ENCODE measurements at regions of chr1 and their contacts with region 1.

Region 1: DNA sequence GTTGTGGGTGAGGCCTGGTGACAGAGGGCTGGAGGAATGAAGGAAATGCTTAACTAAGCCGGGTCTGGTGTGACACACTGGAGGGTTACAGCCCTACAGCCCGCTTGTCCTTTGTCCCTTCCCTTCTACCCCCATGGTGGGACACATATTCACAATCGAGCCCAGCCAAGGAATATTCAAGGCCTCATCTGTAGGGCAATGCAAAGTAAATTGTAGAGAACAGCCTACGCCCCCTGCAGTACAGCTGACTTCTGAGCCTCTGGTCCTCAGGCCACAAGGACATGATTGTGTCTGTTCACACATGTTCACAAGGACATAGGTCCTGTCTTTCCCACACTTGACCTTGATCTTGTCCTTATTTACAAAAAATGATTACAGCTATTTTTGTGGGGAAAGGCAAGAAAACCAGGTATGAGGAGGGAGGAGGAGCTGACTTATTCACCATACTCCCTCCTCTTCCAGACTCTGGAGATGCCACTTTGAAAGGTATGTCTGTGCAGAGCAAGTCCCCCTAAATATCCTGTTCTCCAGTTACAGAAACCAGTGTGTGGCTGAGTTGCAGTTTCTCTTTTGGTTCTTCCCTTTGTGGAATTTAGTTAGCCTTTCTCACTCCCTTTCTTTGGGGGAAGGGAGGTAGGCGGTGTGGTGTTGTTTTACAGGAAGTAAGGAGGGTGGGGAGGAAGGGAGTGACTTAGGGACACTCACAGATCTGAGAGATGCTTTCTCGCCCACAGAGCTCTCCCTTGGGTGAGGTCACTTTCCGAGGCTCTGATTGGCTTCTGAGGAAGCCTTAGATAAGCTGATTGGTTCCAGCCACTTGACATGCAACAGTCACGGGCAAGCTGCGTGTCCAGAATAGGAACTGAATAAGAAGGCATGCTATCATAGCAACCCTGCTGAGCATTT is 14.6 kb downstream of the POLR3GL start:
- DNase-seq: peak; percentile 68 to 93
- ATAC-seq: peak; percentile 81 to 93 (median 87)
- H3K4me3 ChIP-seq: peak overlapping the region; percentile 6
- H3K4me3 Mint-ChIP-seq: no peak overlapping the region
- H3K27ac ChIP-seq: peak overlapping the region; percentile 97
- H3K27ac Mint-ChIP-seq: no peak overlapping the region
- H3K4me1 ChIP-seq: peaks cover 58% of the 10 kb centered on the region
- H3K4me1 Mint-ChIP-seq: peaks cover 10 to 29% of the 10 kb centered on the region in 2 donors
- H3K27me3 ChIP-seq: no peaks in the 10 kb centered on the region
- H3K27me3 Mint-ChIP-seq: no peaks in the 10 kb centered on the region
- CTCF ChIP-seq: no peak

Region 2: GRCh38 chr1:145804235-145805045 is 174.7 kb before region 1 on chr1:
- intact Hi-C with region 1: no loop called
- DNase-seq: no peak
- ATAC-seq: peak in 1 of 3 donors; percentile 30
- H3K4me3 ChIP-seq: no peak overlapping the region
- H3K4me3 Mint-ChIP-seq: no peak overlapping the region
- H3K27ac ChIP-seq: no peak overlapping the region
- H3K27ac Mint-ChIP-seq: peak overlapping the region in 1 of 2 donors; percentile 35
- H3K4me1 ChIP-seq: no peaks in the 10 kb centered on the region
- H3K4me1 Mint-ChIP-seq: peaks cover 62 to 73% of the 10 kb centered on the region in 2 donors
- H3K27me3 ChIP-seq: no peaks in the 10 kb centered on the region
- H3K27me3 Mint-ChIP-seq: no peaks in the 10 kb centered on the region
- CTCF ChIP-seq: no peak

Region 3: DNA sequence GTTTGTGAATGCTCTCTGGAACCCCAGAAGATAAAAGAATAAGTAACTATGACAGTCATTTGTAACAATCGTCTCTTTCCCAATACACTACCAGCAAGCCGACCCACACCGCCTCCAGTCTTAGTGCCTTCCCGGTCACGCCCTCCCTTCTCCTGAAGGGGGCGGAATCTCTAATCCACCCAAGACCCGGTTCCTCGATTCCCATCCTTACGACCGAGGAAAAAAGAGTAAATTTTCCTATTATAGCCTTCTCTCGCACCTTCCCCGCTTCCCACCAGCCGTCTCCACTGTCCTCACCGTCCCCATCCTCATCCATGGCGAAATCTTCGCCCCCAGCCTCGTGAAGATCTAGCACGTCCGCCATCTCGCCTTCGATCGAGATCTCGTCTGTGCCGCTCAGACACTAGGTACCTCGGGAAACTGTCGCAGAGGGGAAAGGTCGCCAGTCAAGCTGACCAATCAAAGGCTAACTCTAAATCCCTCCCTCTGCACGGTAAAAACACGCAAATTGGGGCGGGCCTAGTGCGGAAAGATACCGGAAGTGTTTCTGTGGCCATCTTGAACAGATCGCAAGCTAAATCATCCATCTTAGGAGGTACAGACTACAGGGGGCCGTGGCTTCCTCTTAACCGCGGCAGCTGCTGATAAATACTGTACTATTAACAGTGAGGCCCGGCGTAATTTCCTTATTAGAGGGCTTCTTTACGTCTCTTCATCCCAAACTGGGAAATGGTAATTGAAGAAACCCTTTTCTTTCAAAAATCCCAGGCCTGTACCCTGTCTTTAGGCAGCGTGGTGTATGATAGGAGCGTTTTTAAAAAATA is 51.8 kb before region 1 on chr1 and contains the start of gene RBM8A:
- intact Hi-C with region 1: loop called (anchors 5 kb)
- DNase-seq: peak; percentile 87 to 99
- ATAC-seq: peak; percentile 96 to 99 (median 96)
- H3K4me3 ChIP-seq: peak within 1 kb of the TSS; percentile 64
- H3K4me3 Mint-ChIP-seq: no peak within 1 kb of the TSS
- H3K27ac ChIP-seq: peak within 1 kb of the TSS; percentile 100
- H3K27ac Mint-ChIP-seq: no peak within 1 kb of the TSS
- H3K4me1 ChIP-seq: peaks cover 25% of the 10 kb centered on the region
- H3K4me1 Mint-ChIP-seq: peaks cover 14 to 20% of the 10 kb centered on the region in 2 donors
- H3K27me3 ChIP-seq: no peaks in the 10 kb centered on the region
- H3K27me3 Mint-ChIP-seq: no peaks in the 10 kb centered on the region
- CTCF ChIP-seq: peak; percentile 73
- total RNA-seq, gene RBM8A: 172 to 204 (median 200) TPM

Region 4: GRCh38 chr1:145947551-145947950 is 31.6 kb before region 1 on chr1:
- intact Hi-C with region 1: no loop called
- DNase-seq: no peak
- ATAC-seq: no peak
- H3K4me3 ChIP-seq: no peak overlapping the region
- H3K4me3 Mint-ChIP-seq: no peak overlapping the region
- H3K27ac ChIP-seq: no peak overlapping the region
- H3K27ac Mint-ChIP-seq: peak overlapping the region in 1 of 2 donors; percentile 50
- H3K4me1 ChIP-seq: peaks cover 9% of the 10 kb centered on the region
- H3K4me1 Mint-ChIP-seq: peaks cover 20 to 39% of the 10 kb centered on the region in 2 donors
- H3K27me3 ChIP-seq: no peaks in the 10 kb centered on the region
- H3K27me3 Mint-ChIP-seq: no peaks in the 10 kb centered on the region
- CTCF ChIP-seq: no peak

Region 5: DNA sequence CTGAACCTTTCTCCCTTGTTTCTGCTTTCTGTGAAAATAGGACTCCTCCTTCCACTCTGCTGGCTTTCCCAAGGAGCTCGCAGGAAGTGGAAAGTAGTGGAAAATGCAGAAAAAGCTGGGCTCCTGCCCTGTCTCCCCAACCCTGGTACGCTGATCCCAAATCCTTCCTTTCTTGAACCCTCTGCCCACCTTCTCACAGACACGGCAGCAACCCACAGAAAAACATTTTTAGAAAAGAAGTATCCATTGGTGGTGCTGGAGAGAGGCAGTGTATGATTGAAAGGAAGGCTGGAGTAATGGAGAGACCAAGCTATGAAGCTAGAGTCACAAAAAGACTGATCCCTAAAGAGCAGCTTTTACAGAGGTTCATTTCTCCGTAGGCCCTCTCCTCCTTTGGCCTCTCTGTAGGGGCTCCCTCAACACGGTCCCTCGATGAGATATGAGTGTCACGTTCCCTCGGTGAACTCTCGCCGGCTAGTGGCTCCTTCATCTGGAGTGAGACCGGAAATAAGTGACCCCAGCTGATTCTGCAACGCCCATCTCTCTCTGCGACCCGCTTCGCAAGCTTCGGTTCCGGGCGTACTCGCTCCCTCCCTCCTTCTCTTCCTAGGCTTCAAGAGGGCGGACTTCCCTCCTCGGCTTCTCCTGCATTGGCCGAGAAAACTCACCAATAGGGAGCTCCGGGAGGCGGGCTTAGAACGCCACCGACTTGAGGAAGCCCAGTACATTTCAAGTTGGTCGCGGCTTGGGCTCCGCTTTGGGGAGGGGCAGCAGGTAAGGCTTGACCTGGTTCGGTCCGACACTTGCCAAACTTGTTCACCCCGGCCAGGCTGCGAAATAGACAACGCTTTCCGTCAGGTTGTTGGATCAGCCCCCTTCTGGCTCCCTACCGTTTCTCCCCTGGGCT is 14.9 kb before region 1 on chr1 and contains the starts of genes ANKRD34A and POLR3GL:
- intact Hi-C with region 1: loop called (anchors 2 kb)
- DNase-seq: peak; percentile 87 to 94
- ATAC-seq: peak; percentile 90 to 98 (median 94)
- H3K4me3 ChIP-seq: peak within 1 kb of the TSS; percentile 68
- H3K4me3 Mint-ChIP-seq: peak within 1 kb of the TSS; percentile 94
- H3K27ac ChIP-seq: peak within 1 kb of the TSS; percentile 81
- H3K27ac Mint-ChIP-seq: peak within 1 kb of the TSS; percentile 87 to 95
- H3K4me1 ChIP-seq: peaks cover 48% of the 10 kb centered on the region
- H3K4me1 Mint-ChIP-seq: peaks cover 55 to 65% of the 10 kb centered on the region in 2 donors
- H3K27me3 ChIP-seq: no peaks in the 10 kb centered on the region
- H3K27me3 Mint-ChIP-seq: no peaks in the 10 kb centered on the region
- CTCF ChIP-seq: no peak
- total RNA-seq, gene ANKRD34A: 1.4 to 1.9 (median 1.4) TPM
- total RNA-seq, gene POLR3GL: 34.9 to 37.5 (median 37.4) TPM

Region 6: GRCh38 chr1:145990249-145991097 is 11.4 kb after region 1 on chr1:
- intact Hi-C with region 1: no loop called
- DNase-seq: peak in 1 of 2 donors; percentile 39
- ATAC-seq: no peak
- H3K4me3 ChIP-seq: no peak overlapping the region
- H3K4me3 Mint-ChIP-seq: peak overlapping the region; percentile 97
- H3K27ac ChIP-seq: no peak overlapping the region
- H3K27ac Mint-ChIP-seq: peak overlapping the region; percentile 97 to 99
- H3K4me1 ChIP-seq: peaks cover 29% of the 10 kb centered on the region
- H3K4me1 Mint-ChIP-seq: peaks cover 62 to 69% of the 10 kb centered on the region in 2 donors
- H3K27me3 ChIP-seq: no peaks in the 10 kb centered on the region
- H3K27me3 Mint-ChIP-seq: no peaks in the 10 kb centered on the region
- CTCF ChIP-seq: no peak

Region 7: DNA sequence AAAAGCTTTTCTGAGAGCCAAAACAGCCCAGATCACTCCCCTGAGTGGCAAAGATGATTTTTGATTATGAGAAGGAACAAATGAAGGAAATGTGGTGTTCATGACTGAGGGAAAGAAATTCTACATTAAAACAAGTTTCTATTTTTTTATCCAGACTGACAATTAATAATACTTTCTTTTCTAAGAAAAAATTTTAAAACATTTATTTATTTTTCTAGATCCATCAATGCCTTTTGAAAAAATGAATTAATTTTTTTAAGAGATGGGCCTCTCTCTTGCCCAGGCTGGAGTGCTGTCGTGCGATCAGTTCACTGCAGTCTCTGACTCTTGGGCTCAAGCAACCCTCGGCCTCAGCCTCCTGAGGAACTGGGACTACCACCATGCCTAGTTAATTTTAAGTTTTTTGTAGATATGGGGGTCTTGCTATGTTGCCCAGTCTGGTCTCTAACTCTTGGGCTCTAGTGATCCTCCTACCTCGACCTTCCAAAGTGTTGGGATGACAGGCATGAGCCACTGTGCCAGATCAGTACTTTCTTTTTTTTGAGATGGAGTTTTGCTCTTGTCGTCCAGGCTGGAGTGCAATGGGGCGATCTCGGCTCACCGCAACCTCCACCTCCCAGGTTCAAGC is 28.5 kb after region 1 on chr1:
- intact Hi-C with region 1: loop called (anchors 2 kb)
- DNase-seq: no peak
- ATAC-seq: no peak
- H3K4me3 ChIP-seq: no peak overlapping the region
- H3K4me3 Mint-ChIP-seq: peak overlapping the region; percentile 82
- H3K27ac ChIP-seq: peak overlapping the region; percentile 94
- H3K27ac Mint-ChIP-seq: peak overlapping the region; percentile 92 to 94
- H3K4me1 ChIP-seq: peaks cover 20% of the 10 kb centered on the region
- H3K4me1 Mint-ChIP-seq: peaks cover 25 to 28% of the 10 kb centered on the region in 2 donors
- H3K27me3 ChIP-seq: no peaks in the 10 kb centered on the region
- H3K27me3 Mint-ChIP-seq: no peaks in the 10 kb centered on the region
- CTCF ChIP-seq: peak; percentile 57

Region 8: GRCh38 chr1:146036965-146037646 is 58.0 kb after region 1 on chr1:
- intact Hi-C with region 1: loop called (anchors 1 kb)
- DNase-seq: peak; percentile 69 to 87
- ATAC-seq: peak; percentile 29 to 60 (median 42)
- H3K4me3 ChIP-seq: peak overlapping the region; percentile 63
- H3K4me3 Mint-ChIP-seq: peak overlapping the region; percentile 97
- H3K27ac ChIP-seq: peak overlapping the region; percentile 56
- H3K27ac Mint-ChIP-seq: peak overlapping the region; percentile 99
- H3K4me1 ChIP-seq: peaks cover 37% of the 10 kb centered on the region
- H3K4me1 Mint-ChIP-seq: peaks cover 44 to 49% of the 10 kb centered on the region in 2 donors
- H3K27me3 ChIP-seq: no peaks in the 10 kb centered on the region
- H3K27me3 Mint-ChIP-seq: peaks cover 6 to 16% of the 10 kb centered on the region in 2 donors
- CTCF ChIP-seq: no peak

Region 9: DNA sequence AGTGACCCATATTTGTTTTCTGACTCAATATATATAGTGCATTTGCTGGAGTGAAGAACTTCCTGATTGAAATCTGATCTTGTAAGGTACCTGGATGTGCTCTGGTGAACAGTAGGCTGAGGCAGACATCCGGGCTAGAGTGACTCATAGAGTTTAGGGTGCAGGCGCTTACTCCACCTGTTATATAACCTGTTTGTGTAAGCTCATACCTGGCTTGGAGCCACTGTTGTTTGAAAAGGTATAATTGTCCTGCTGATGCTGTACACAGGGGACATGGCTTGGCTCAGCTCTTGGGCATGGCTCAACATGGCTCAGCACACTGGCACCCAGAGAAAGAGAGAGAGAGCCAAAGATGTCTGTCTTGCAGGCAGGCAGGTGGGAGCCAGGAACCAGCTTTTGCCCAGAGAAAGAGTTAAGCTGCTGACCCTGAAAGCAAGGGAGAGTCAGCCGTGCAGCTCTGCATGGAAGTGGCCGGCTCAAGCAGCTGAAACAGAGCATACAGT is 1738.0 kb after region 1 on chr1:
- intact Hi-C with region 1: no loop called
- DNase-seq: peak in 1 of 2 donors; percentile 17
- ATAC-seq: no peak
- H3K4me3 ChIP-seq: no peak overlapping the region
- H3K4me3 Mint-ChIP-seq: no peak overlapping the region
- H3K27ac ChIP-seq: no peak overlapping the region
- H3K27ac Mint-ChIP-seq: no peak overlapping the region
- H3K4me1 ChIP-seq: no peaks in the 10 kb centered on the region
- H3K4me1 Mint-ChIP-seq: peaks cover 4 to 5% of the 10 kb centered on the region in 2 donors
- H3K27me3 ChIP-seq: no peaks in the 10 kb centered on the region
- H3K27me3 Mint-ChIP-seq: peaks cover 38 to 42% of the 10 kb centered on the region in 2 donors
- CTCF ChIP-seq: no peak

Measured in natural killer cell (primary cell).